Activated CD4-positive, alpha-beta T cell treated with anti-CD3 and anti-CD28 coated beads for 36 hours (primary cell): ENCODE measurements at regions of chr1 and their contacts with region 1.

Region 1: DNA sequence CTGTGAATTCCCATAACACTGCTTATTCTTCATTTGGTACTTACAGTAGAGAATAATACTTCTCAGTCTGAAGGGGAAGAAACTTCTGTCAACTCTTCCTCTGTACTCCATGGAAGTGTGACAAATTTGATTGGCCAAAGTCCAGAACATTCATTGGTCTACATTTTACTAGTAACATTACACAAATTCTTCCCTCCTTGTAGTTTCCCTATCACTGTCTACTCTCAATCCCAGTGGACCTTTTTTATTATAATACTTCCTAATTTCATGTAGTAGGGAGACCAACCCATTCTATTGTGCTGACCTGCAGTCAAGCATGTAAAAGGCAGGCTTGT is 74.7 kb downstream of the ALG6 start:
- DNase-seq: no peak
- ATAC-seq: no peak
- H3K4me3 Mint-ChIP-seq: no peak overlapping the region
- H3K27ac Mint-ChIP-seq: no peak overlapping the region
- H3K4me1 Mint-ChIP-seq: no peaks in the 10 kb centered on the region
- H3K27me3 Mint-ChIP-seq: no peaks in the 10 kb centered on the region

Region 2: DNA sequence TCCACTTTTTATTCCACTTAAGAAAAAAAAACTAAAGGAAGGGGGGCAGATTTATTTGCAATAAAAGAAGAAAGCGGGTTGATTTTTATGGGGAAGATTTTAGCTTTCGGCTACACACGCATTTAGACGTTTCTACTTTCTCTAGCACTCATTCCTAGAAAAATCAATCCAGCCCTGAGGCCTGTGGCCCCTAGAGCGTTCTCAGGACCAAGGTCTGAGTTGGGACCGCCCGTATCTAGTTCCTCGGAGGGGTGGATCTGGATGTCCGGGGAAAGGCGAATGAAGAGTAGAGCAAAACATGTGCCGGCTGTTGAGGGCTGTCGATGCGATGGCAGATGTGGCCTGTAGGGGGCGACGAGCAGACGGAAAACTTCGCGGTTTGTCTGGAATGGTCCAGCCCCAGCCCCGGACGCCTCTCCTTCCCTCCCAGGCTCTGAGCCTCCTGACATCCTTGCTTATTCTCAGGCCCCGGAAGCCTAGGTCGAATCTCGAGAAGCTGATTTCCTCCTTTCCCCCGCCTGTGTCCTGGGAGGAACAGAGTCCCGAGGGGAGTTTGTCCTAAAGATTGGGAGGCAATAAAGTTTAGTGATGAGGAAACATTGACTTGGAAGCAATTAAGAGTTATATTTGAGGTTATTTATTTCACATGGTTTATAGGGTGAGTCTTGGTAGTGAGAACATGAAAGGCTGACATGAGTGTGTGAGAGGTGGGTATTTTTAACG is 114.5 kb before region 1 on chr1:
- CTCF ChIA-PET with region 1: interaction called, 10 read pairs
- POLR2A ChIA-PET with region 1: no interaction called
- intact Hi-C with region 1: loop called (anchors 1 to 10 kb)
- DNase-seq: peak; percentile 79
- ATAC-seq: peak; percentile 61
- H3K4me3 Mint-ChIP-seq: peak overlapping the region; percentile 0
- H3K27ac Mint-ChIP-seq: no peak overlapping the region
- H3K4me1 Mint-ChIP-seq: peaks cover 24% of the 10 kb centered on the region
- H3K27me3 Mint-ChIP-seq: peaks cover 61% of the 10 kb centered on the region

Region 3: DNA sequence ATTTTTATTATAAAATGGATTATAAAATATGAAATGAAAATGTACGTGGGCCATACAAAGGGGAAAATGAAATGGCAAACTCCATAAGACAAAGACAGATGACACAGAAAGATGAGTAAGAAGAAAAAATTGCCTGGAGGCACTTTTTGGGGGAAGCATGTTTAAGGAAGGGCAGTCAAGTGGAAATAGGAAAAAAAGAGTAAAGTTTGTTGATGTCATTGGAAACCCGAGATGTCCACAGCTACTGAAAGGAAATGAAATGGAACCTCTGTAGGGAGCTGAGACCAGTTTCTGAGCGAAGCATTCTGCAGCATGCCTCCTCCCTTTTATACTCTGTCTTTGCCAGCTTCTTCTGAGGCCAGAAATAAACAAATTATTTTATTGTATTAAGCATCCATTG is 557.9 kb after region 1 on chr1:
- CTCF ChIA-PET with region 1: no interaction called
- POLR2A ChIA-PET with region 1: no interaction called
- intact Hi-C with region 1: no loop called
- DNase-seq: no peak
- ATAC-seq: no peak
- H3K4me3 Mint-ChIP-seq: no peak overlapping the region
- H3K27ac Mint-ChIP-seq: no peak overlapping the region
- H3K4me1 Mint-ChIP-seq: no peaks in the 10 kb centered on the region
- H3K27me3 Mint-ChIP-seq: peaks cover 3% of the 10 kb centered on the region